GM12878 (cell line): ENCODE measurements at regions of chr1 and their contacts with region 1.

Region 1: GRCh38 chr1:219391297-219391696 is 217.6 kb downstream of the LYPLAL1 start:
- DNase-seq: no peak
- ATAC-seq: no peak
- H3K4me3 ChIP-seq: no peak overlapping the region
- H3K27ac ChIP-seq: no peak overlapping the region
- H3K4me1 ChIP-seq: no peaks in the 10 kb centered on the region
- H3K27me3 ChIP-seq: no peaks in the 10 kb centered on the region
- CTCF ChIP-seq: no peak
- EP300 ChIP-seq: no peak
- POLR2A ChIP-seq: no peak
- RAD21 ChIP-seq: no peak

Region 2: DNA sequence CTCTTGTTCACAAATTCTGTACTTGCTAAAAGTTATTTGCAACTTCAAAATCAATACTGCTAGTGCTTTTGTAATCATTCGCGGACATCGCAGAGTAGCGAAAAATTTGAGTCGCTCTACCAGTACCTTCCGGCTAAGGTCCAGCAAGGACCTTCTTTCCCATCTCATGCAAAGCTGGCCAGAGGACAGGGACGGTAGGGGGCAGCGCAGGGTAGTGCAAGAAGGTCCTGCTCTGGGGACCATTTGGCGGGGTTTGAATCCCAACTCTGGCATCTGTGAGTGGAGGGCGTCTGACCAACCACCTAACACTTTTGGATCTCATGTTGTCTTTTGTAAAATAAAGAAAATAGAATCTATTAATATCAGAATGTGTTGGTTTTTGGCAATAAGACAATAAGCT is 1501.9 kb before region 1 on chr1:
- CTCF ChIA-PET with region 1: no interaction called
- POLR2A ChIA-PET with region 1: interaction called, 10 read pairs
- RAD21 ChIA-PET with region 1: no interaction called
- SMC1A ChIA-PET with region 1: no interaction called
- in situ Hi-C with region 1: no loop called
- intact Hi-C with region 1: no loop called
- DNase-seq: no peak
- ATAC-seq: no peak
- H3K4me3 ChIP-seq: no peak overlapping the region
- H3K27ac ChIP-seq: no peak overlapping the region
- H3K4me1 ChIP-seq: no peaks in the 10 kb centered on the region
- H3K27me3 ChIP-seq: no peaks in the 10 kb centered on the region
- CTCF ChIP-seq: no peak
- EP300 ChIP-seq: no peak
- POLR2A ChIP-seq: no peak
- RAD21 ChIP-seq: no peak